Cardiac septum (tissue), 1 donor: ENCODE measurements at regions of chr10 and their contacts with region 1.

Region 1: GRCh38 chr10:21533467-21534279 is at the start of gene MLLT10:
- DNase-seq: peak; percentile 96
- total RNA-seq, gene MLLT10: 32.5 TPM

Region 2: DNA sequence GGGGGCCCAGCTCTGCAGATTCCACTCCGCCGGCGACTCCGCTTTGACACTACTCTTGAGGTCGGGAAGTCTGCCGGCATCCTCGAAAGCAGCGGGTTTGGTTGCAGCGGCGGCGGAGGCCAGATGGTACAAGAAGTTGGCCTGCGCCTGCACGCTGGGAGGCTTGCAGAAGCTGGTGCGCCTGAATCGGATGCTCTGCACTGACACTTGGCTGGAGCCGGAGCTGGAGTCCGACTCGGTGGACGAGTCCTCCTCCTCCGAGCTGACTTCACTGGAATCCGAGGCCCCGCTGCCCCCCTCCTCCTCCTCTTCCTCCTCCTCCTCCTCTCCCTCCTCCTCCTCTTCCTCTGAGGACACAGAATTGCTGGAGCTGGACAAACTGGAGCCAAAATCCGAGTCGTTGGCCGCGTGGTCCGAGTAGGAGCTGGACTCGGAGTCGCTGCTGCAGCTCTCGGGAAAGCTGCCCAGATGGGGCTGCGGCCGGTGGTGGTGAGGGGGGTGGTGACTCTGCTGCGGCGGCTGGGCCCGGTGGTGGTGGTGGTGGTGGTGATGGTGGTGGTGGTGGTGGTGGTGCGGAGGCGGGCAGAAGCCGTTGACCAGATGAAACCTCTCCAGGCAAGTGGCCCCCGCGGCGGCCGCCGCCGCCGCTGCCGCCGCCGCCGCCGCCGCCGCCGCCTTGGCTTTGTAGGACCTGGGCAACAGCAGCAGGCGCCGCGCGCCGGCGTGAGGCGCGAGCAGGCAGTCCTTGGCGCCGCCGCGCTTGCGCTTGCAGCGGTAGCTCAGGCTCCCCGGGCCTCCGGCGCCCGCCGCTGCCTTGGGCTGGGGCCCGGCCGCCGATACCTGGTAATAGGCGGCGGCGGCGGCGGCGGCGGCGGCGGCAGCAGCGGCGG is 17.2 kb before region 1 on chr10:
- intact Hi-C with region 1: loop called (anchors 1 kb)
- DNase-seq: no peak

Region 3: DNA sequence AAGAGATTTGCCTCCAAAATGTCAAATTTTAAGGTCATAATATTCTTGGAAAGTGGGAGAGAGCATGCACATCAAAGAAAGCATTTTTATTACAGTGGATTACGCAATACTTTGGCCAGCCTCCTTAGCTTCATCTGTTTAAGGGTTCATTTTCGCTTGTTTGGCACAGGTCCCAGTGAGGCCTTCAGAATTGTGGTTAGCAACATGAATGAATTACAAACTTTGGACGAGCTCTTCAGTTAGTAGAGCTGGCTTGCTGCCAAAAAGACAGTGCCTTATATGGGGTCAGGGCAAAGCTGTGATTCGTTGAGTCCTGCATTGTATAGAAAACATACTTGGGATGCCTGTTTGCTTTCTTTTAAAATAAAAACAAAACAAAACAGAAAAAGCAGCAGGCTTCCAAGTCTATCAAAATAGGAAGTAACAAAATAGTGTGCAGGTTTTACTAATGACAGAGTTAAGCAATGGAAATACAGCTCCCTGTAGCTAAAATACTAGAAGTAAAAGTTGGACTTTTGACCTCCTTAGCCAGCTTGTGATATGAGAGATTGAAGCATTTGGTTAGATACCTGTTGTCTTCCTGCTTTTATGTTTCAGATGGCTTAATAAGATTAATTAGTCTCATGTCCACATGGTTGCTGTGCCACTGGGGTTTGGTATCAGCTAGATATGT is 191.2 kb after region 1 on chr10:
- intact Hi-C with region 1: loop called (anchors 10 kb)
- DNase-seq: peak; percentile 83

Region 4: GRCh38 chr10:21953585-21954057 is 419.9 kb after region 1 on chr10:
- intact Hi-C with region 1: loop called (anchors 10 kb)
- DNase-seq: no peak